GM18951 (cell line): ENCODE measurements at regions of chr6 and their contacts with region 1.

Region 1: DNA sequence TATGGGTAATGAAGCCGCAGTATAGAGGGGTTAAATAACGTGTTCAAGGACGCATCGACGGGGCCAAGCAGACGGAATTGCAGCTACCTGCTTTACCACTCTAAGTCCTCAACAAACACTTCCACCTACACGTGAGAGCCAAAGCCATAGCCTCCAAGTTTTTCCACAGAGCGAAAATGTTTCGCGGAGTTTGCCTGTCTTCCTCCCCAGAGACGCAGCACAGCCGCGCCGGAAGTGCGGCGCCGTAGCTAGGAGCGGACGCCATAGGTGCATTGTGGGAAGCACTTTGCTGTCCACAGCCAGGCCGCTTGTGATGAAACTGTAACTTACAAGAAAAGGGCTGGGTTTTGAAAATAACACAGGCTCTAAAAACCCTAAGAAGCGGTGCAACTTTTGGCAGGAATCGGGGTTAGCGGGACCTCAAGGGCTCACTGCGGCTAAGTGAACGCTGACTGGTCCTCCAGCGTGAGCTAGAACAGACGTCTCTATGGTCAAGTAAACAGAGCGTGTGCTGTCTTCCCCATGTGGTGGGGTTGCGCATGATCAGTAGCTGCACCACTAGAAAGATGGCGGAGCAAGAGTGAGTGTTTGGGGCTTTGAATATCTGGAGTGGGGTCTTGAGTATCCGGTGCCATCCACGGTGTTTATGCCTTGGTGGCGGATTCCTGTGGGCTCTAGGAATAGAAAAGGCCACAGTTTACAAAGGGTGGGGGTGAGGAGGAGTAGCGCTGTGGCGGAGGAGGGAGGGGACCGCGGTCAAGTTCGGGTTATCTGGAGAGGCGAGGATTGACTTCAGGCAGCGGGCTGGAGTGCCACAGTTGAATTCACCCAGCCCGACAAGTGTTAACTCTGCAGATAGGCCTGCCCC is at the start of gene RPL7L1:
- POLR2A ChIP-seq: peak; percentile 77

Region 2: DNA sequence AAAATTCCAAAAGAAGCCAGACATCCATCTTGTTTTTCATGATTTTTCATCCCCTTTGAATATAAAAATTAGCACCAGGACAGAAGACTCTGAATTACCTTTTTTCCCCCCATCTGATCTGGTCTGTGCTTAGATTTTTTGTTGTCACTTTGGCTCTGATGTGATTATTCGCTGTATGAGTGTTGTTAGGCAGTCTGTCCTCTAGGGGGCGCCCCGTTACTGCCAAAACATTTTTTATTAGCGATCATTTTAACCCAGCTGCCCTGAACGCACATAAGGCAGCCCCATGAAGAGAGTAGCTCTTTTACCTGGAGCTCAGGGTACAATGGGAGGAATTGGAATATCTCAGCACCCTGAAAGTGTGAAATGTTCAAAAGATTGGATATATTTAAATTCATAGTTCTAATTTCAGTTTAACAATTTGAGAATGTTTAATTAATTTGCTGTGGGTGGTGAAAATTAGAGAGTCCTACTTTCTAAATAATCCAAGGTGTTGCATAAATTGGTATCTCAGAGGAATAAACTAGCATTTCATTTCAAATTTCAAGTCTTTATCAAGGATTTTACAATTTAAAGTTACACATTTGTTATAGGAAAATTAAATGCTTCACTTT is 218.0 kb before region 1 on chr6:
- in situ Hi-C with region 1: loop called (anchors 10 kb)
- POLR2A ChIP-seq: no peak